Esophagus muscularis mucosa (tissue), 4 donors: ENCODE measurements at regions of chr2 and their contacts with region 1.

Region 1: DNA sequence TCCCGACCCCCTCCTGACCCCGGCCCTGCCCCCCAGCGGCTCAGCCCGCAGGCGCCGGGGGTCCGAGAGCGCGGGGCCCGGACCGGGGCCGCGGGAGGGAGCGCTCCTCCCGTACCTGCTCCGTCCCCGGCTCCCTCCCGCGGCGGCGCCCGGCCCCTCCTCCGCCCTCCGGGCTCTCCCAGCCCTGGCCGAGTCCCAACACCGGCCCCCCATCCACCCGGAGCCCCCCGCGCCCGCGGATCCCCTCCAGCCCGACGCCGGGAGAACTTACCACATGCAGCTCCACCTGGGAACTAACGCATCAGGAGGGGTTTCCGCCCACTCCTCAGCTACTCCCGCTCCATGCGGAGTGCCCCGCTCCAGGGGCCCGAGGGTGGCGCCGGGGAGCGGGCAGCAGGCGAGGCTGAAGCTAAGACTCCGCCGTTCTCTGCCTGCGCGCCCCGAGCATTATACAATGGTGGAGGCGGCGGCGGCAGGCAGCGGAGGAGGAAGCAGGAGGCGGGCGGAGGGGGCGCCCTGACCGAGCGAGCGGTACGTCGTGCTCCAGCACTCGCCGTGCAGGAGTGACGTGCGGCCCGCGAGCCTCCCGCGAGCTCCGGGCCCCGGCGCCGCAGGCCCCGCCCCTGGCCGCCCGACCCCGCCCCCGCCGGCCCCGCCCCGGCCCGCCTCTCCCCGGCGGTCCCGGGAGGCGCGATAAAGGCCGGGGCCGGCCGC is at the start of gene SERTAD2:
- DNase-seq: no peak
- H3K4me3 ChIP-seq: peak within 1 kb of the TSS; percentile 68 to 98 (median 93)
- H3K27ac ChIP-seq: peak within 1 kb of the TSS; percentile 99 to 100 (median 100)
- H3K4me1 ChIP-seq: peaks cover 39 to 56% (median 51%) of the 10 kb centered on the region in 4 donors
- H3K27me3 ChIP-seq: no peaks in the 10 kb centered on the region
- CTCF ChIP-seq: peak in 1 of 3 experiments; percentile 2
- EP300 ChIP-seq: no peak
- POLR2A ChIP-seq: peak; percentile 88
- total RNA-seq, gene SERTAD2: 12.1 to 18.1 (median 14.3) TPM

Region 2: GRCh38 chr2:64453770-64454385 is 199.6 kb before region 1 on chr2 and contains the start of gene LGALSL:
- intact Hi-C with region 1: loop called (anchors 10 kb)
- DNase-seq: peak; percentile 93
- H3K4me3 ChIP-seq: peak within 1 kb of the TSS; percentile 83 to 97 (median 89)
- H3K27ac ChIP-seq: peak within 1 kb of the TSS; percentile 96 to 98 (median 98)
- H3K4me1 ChIP-seq: peaks cover 20 to 29% (median 22%) of the 10 kb centered on the region in 4 donors
- H3K27me3 ChIP-seq: no peaks in the 10 kb centered on the region
- CTCF ChIP-seq: no peak
- EP300 ChIP-seq: no peak
- POLR2A ChIP-seq: peak; percentile 47
- total RNA-seq, gene LGALSL: 12.3 to 20.2 (median 17.5) TPM

Region 3: GRCh38 chr2:64609227-64609941 is 44.1 kb before region 1 on chr2:
- intact Hi-C with region 1: loop called (anchors 5 kb)
- DNase-seq: no peak
- H3K4me3 ChIP-seq: peak overlapping the region; percentile 64 to 72 (median 68)
- H3K27ac ChIP-seq: peak overlapping the region; percentile 62 to 77 (median 74)
- H3K4me1 ChIP-seq: peaks cover 8 to 40% (median 25%) of the 10 kb centered on the region in 4 donors
- H3K27me3 ChIP-seq: no peaks in the 10 kb centered on the region
- CTCF ChIP-seq: peak; percentile 48 to 73 (median 63)
- EP300 ChIP-seq: no peak
- POLR2A ChIP-seq: no peak

Region 4: GRCh38 chr2:64698668-64699444 is 45.4 kb after region 1 on chr2:
- intact Hi-C with region 1: no loop called
- DNase-seq: no peak
- H3K4me3 ChIP-seq: no peak overlapping the region
- H3K27ac ChIP-seq: no peak overlapping the region
- H3K4me1 ChIP-seq: peaks cover 0 to 4% (median 1%) of the 10 kb centered on the region in 4 donors
- H3K27me3 ChIP-seq: no peaks in the 10 kb centered on the region
- CTCF ChIP-seq: no peak
- EP300 ChIP-seq: no peak
- POLR2A ChIP-seq: no peak

Region 5: GRCh38 chr2:64750817-64751285 is 97.3 kb after region 1 on chr2:
- intact Hi-C with region 1: loop called (anchors 5 kb)
- DNase-seq: peak; percentile 100
- H3K4me3 ChIP-seq: peak overlapping the region; percentile 77 to 88 (median 80)
- H3K27ac ChIP-seq: peak overlapping the region; percentile 96 to 99 (median 98)
- H3K4me1 ChIP-seq: peaks cover 12 to 35% (median 27%) of the 10 kb centered on the region in 4 donors
- H3K27me3 ChIP-seq: no peaks in the 10 kb centered on the region
- CTCF ChIP-seq: peak in 1 of 3 experiments; percentile 16
- EP300 ChIP-seq: no peak
- POLR2A ChIP-seq: peak; percentile 96